AG04450 (cell line): ENCODE measurements at regions of chr3 and their contacts with region 1.

Region 1: GRCh38 chr3:143375698-143376097 is 256.1 kb downstream of the CHST2 start:
- DNase-seq: no peak
- H3K4me3 ChIP-seq: no peak overlapping the region
- H3K27ac ChIP-seq: no peak overlapping the region
- H3K27me3 ChIP-seq: no peaks in the 10 kb centered on the region
- CTCF ChIP-seq: no peak

Region 2: GRCh38 chr3:143352850-143353550 is 22.7 kb before region 1 on chr3:
- CTCF ChIA-PET with region 1: no interaction called
- POLR2A ChIA-PET with region 1: interaction called, 11 read pairs
- DNase-seq: no peak
- H3K4me3 ChIP-seq: no peak overlapping the region
- H3K27ac ChIP-seq: no peak overlapping the region
- H3K27me3 ChIP-seq: no peaks in the 10 kb centered on the region
- CTCF ChIP-seq: no peak